Ascending aorta (tissue), 2 donors: ENCODE measurements at regions of chr16 and their contacts with region 1.

Region 1: DNA sequence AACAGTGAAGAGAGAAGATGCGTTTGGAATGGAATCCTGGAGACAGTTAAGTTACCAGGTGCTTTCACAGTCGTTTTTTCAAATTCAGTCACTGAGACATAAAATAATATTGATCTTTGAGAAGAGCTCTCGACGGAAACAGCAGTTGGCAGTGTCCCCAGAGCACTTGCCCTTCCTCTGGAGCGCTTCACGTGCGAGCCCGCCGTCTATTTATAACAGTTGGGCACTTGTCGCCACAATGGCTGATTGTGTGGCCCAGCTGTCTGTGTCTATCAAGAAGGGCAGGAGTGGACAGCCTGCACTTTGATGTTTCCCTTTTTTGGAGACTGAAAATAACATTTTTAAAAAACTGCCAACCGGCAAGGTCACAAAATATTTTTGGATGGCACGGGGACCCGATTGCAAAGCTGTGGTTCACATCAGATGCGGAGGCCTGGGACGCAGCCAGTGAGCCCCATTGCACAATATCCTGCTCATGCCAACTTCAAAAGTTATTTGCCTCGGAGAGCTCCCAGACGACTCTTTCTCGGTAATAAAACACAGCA is 62.9 kb downstream of the ADCY9 start:
- DNase-seq: peak; percentile 27 to 91
- H3K4me3 ChIP-seq: peak overlapping the region; percentile 35 to 50
- H3K27ac ChIP-seq: peak overlapping the region; percentile 48 to 75
- H3K4me1 ChIP-seq: peaks cover 3 to 15% of the 10 kb centered on the region in 2 donors
- H3K27me3 ChIP-seq: no peaks in the 10 kb centered on the region
- CTCF ChIP-seq: no peak

Region 2: DNA sequence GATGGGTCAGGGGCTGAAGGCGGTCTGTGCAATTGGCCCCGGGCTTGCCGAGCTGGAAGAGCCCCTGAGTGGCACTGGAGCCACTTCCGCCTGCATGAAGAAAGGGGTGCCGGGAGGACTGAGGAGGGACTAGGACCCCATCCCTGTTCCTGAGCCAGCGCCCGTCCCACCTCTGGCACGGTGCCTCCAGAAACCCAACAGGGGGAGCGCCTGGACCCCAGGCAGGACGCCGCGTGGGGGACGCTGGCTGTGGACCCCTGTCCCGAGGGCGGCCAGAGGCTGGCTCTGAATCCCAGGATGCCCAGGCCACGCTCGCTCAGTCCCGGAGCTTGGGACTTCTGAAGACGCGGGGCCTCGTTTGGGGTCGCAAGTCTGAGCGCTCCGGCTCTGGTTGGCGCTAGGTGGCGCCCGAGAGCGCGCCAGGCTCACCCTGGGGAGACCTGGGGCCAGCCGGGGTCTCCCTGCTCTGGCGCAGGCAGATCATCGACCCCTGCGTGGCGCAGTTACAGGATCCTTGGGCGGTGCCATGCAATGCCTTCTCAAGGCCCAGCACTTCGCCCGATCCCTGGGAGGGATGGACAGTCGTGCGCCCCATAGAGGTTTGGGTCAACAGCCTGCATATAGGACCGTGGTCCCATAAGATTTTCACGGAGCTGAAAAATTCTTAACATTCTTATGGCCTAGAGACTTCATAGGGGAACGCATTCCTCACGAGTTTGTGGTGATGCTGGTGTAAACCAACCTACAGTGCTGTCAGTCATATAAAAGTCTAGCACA is 114.3 kb before region 1 on chr16:
- intact Hi-C with region 1: no loop called
- DNase-seq: no peak
- H3K4me3 ChIP-seq: peak overlapping the region; percentile 53 to 80
- H3K27ac ChIP-seq: no peak overlapping the region
- H3K4me1 ChIP-seq: peaks cover 0 to 5% of the 10 kb centered on the region in 2 donors
- H3K27me3 ChIP-seq: no peaks in the 10 kb centered on the region
- CTCF ChIP-seq: peak; percentile 80 to 99 (median 99)

Region 3: GRCh38 chr16:3999479-4000325 is 53.7 kb before region 1 on chr16:
- intact Hi-C with region 1: loop called (anchors 5 kb)
- DNase-seq: peak in 1 of 2 donors; percentile 77
- H3K4me3 ChIP-seq: no peak overlapping the region
- H3K27ac ChIP-seq: peak overlapping the region; percentile 21 to 27
- H3K4me1 ChIP-seq: peaks cover 4 to 18% of the 10 kb centered on the region in 2 donors
- H3K27me3 ChIP-seq: no peaks in the 10 kb centered on the region
- CTCF ChIP-seq: no peak

Region 4: DNA sequence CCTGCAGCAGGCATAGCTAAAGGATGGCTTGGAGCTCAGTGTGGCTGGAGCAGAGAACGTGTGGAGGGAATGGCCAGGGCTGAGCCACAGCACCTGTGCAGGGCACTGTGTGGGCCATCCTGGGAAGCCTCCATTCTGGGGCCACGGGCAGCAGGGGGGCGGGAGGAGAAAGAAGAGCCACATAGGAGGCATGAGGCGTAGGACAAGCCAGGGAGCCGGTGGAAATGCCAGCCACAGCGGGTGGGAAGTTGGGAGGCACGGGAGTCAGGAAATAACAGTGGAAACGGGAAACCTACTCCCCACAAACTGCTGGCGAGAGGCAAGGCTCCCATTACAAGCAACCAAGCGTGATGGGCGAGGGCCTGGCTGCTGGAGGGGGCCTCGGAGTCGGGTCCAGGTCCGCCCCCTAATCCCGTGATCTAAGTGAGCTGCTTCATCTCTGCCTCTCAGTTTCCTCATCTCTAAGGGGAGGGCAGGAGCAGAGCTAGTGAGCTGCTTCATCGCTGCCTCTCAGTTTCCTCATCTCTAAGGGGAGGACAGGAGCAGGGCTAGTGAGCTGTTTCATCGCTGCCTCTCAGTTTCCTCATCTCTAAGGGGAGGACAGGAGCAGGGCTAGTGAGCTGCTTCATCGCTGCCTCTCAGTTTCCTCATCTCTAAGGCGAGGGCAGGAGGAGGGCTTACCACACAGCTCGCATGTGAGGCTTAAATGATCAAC is 42.0 kb before region 1 on chr16:
- intact Hi-C with region 1: loop called (anchors 2 kb)
- DNase-seq: no peak
- H3K4me3 ChIP-seq: no peak overlapping the region
- H3K27ac ChIP-seq: peak overlapping the region in 1 of 2 donors; percentile 38
- H3K4me1 ChIP-seq: peaks cover 4 to 14% of the 10 kb centered on the region in 2 donors
- H3K27me3 ChIP-seq: no peaks in the 10 kb centered on the region
- CTCF ChIP-seq: no peak

Region 5: GRCh38 chr16:4090351-4090851 is 37.0 kb after region 1 on chr16:
- intact Hi-C with region 1: loop called (anchors 2 kb)
- DNase-seq: peak in 1 of 2 donors; percentile 84
- H3K4me3 ChIP-seq: peak overlapping the region; percentile 8 to 46
- H3K27ac ChIP-seq: peak overlapping the region; percentile 69 to 90
- H3K4me1 ChIP-seq: peaks cover 19 to 51% of the 10 kb centered on the region in 2 donors
- H3K27me3 ChIP-seq: no peaks in the 10 kb centered on the region
- CTCF ChIP-seq: no peak